Activated CD8-positive, alpha-beta T cell treated with anti-CD3 and anti-CD28 coated beads for 36 hours (primary cell): ENCODE measurements at regions of chrX and their contacts with region 1.

Region 1: DNA sequence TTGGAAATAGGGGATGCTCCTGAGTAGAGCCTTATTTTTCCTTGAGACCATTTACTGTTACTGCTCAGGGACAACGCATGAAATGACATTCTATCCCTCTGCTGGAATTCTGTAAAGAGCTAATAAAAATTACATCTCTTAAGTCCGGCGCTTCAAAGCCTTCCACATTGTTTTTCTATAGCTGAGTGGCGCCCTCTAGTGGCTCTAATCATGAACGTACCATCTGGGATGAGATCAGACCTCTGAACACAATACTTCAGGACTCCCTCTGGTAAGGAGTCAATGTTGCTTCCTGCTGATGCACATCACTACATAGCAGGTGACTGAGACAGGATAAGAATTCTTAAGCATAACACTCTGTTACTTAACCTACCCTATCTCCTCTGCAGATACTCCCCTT is 6.0 kb downstream of the HMGN5 start:
- DNase-seq: peak; percentile 72
- ATAC-seq: peak; percentile 76
- H3K4me3 Mint-ChIP-seq: no peak overlapping the region
- H3K27ac Mint-ChIP-seq: no peak overlapping the region
- H3K4me1 Mint-ChIP-seq: peaks cover 15% of the 10 kb centered on the region
- H3K27me3 Mint-ChIP-seq: no peaks in the 10 kb centered on the region
- CTCF ChIP-seq: peak; percentile 31

Region 2: GRCh38 chrX:80876877-80877276 is 318.8 kb before region 1 on chrX:
- CTCF ChIA-PET with region 1: no interaction called
- POLR2A ChIA-PET with region 1: no interaction called
- intact Hi-C with region 1: loop called (anchors 5 kb)
- DNase-seq: no peak
- ATAC-seq: no peak
- H3K4me3 Mint-ChIP-seq: no peak overlapping the region
- H3K27ac Mint-ChIP-seq: no peak overlapping the region
- H3K4me1 Mint-ChIP-seq: no peaks in the 10 kb centered on the region
- H3K27me3 Mint-ChIP-seq: no peaks in the 10 kb centered on the region
- CTCF ChIP-seq: peak; percentile 28